Prostate gland (tissue), 2 donors: ENCODE measurements at regions of chr15 and their contacts with region 1.

Region 1: GRCh38 chr15:85412956-85413854 is 32.8 kb downstream of the AKAP13 start:
- DNase-seq: peak; percentile 30
- H3K4me3 ChIP-seq: no peak overlapping the region
- H3K27ac ChIP-seq: peak overlapping the region; percentile 20 to 50
- H3K4me1 ChIP-seq: no peaks in the 10 kb centered on the region
- H3K27me3 ChIP-seq: no peaks in the 10 kb centered on the region
- CTCF ChIP-seq: no peak
- POLR2A ChIP-seq: no peak

Region 2: DNA sequence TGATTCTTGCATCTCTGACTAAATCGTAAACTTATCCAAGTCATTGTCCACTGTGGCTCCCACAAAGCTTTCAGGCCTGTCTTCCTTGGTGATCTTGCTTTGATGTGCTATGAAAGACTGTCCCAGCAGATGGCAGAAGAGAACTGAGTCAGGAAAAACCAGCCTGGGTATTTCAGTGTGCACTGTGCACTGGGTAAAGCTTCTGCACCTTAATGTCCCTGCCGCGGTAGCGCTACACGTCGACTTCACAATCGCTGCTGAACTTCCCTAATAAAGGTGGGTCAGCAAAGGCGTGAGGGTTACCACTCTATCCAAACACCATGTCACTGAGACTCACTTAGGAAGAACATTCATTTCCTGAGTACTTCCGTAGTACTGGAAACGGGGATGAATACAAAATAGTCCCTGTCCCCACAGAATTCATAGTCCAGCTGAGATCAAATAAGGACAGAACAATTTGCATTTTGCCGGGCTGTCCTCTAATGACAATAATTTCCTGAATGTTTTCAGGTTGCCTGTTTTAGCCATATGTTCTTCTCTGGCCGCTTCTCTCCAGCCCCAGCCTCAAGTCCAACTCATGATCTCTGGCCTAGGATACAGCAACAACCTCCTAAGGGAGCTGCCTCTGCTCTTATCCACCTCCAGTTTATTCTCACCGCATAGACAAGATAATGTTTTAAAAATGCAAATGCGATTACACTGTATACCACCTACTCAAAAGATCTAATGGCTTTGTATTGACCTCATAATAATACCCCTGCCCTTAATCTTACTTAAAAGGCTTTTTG is 116.4 kb before region 1 on chr15:
- intact Hi-C with region 1: loop called (anchors 5 kb)
- DNase-seq: peak; percentile 76
- H3K4me3 ChIP-seq: no peak overlapping the region
- H3K27ac ChIP-seq: no peak overlapping the region
- H3K4me1 ChIP-seq: no peaks in the 10 kb centered on the region
- H3K27me3 ChIP-seq: no peaks in the 10 kb centered on the region
- CTCF ChIP-seq: peak; percentile 26 to 86 (median 75)
- POLR2A ChIP-seq: no peak

Region 3: GRCh38 chr15:85386261-85386660 is 26.9 kb before region 1 on chr15:
- intact Hi-C with region 1: loop called (anchors 2 kb)
- DNase-seq: no peak
- H3K4me3 ChIP-seq: no peak overlapping the region
- H3K27ac ChIP-seq: no peak overlapping the region
- H3K4me1 ChIP-seq: no peaks in the 10 kb centered on the region
- H3K27me3 ChIP-seq: no peaks in the 10 kb centered on the region
- CTCF ChIP-seq: no peak
- POLR2A ChIP-seq: no peak